Mammary epithelial cell (primary cell): ENCODE measurements at regions of chr17 and their contacts with region 1.

Region 1: GRCh38 chr17:18141210-18141803 is 32.8 kb downstream of the MYO15A start:
- DNase-seq: peak; percentile 43
- H3K4me3 ChIP-seq: no peak overlapping the region
- H3K27ac ChIP-seq: no peak overlapping the region
- H3K4me1 ChIP-seq: no peaks in the 10 kb centered on the region
- H3K27me3 ChIP-seq: no peaks in the 10 kb centered on the region
- CTCF ChIP-seq: peak; percentile 47 to 51

Region 2: GRCh38 chr17:18087610-18088491 is 53.5 kb before region 1 on chr17 and contains the start of gene DRG2:
- CTCF ChIA-PET with region 1: no interaction called
- dilution Hi-C with region 1: no loop called
- in situ Hi-C with region 1: no loop called
- intact Hi-C with region 1: no loop called
- DNase-seq: peak; percentile 87
- H3K4me3 ChIP-seq: peak within 1 kb of the TSS; percentile 58 to 98 (median 72)
- H3K27ac ChIP-seq: peak within 1 kb of the TSS; percentile 64
- H3K4me1 ChIP-seq: peaks cover 7% of the 10 kb centered on the region
- H3K27me3 ChIP-seq: no peaks in the 10 kb centered on the region
- CTCF ChIP-seq: peak in 1 of 2 donors; percentile 14
- total RNA-seq, gene DRG2: 36.3 to 37.5 TPM

Region 3: GRCh38 chr17:18217412-18218015 is 76.2 kb after region 1 on chr17:
- CTCF ChIA-PET with region 1: no interaction called
- dilution Hi-C with region 1: no loop called
- in situ Hi-C with region 1: no loop called
- intact Hi-C with region 1: loop called (anchors 2 kb)
- DNase-seq: peak; percentile 34
- H3K4me3 ChIP-seq: no peak overlapping the region
- H3K27ac ChIP-seq: no peak overlapping the region
- H3K4me1 ChIP-seq: no peaks in the 10 kb centered on the region
- H3K27me3 ChIP-seq: no peaks in the 10 kb centered on the region
- CTCF ChIP-seq: peak; percentile 96 to 98

Region 4: DNA sequence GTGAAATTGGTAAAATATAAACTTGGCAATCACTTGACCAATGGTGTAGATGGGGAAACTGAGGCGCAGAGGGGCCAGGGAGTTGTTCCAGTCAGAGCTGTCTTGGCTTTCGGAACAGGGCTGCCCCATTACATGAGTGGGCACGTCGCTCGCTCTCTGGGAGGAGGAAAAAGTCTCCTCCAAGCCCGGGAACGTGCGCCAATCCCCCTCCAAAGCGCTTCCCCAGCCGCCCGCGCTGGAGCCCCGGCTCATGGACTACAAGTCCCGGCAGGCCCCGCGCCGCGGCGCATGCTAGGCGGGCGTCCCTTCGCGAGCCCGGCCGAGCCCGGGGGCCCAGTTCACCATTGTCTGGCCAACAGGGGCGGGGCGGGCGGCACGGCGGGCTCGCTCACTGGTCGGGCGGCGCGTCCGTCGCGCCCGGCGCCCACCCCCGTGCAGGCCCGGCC is 83.8 kb after region 1 on chr17:
- CTCF ChIA-PET with region 1: no interaction called
- dilution Hi-C with region 1: loop called (anchors 5 kb)
- in situ Hi-C with region 1: no loop called
- intact Hi-C with region 1: no loop called
- DNase-seq: peak; percentile 91
- H3K4me3 ChIP-seq: peak overlapping the region; percentile 20 to 80 (median 22)
- H3K27ac ChIP-seq: no peak overlapping the region
- H3K4me1 ChIP-seq: peaks cover 14% of the 10 kb centered on the region
- H3K27me3 ChIP-seq: no peaks in the 10 kb centered on the region
- CTCF ChIP-seq: no peak